Activated CD4-positive, alpha-beta T cell treated with anti-CD3 and anti-CD28 coated beads for 36 hours (primary cell): ENCODE measurements at regions of chrX and their contacts with region 1.

Region 1: DNA sequence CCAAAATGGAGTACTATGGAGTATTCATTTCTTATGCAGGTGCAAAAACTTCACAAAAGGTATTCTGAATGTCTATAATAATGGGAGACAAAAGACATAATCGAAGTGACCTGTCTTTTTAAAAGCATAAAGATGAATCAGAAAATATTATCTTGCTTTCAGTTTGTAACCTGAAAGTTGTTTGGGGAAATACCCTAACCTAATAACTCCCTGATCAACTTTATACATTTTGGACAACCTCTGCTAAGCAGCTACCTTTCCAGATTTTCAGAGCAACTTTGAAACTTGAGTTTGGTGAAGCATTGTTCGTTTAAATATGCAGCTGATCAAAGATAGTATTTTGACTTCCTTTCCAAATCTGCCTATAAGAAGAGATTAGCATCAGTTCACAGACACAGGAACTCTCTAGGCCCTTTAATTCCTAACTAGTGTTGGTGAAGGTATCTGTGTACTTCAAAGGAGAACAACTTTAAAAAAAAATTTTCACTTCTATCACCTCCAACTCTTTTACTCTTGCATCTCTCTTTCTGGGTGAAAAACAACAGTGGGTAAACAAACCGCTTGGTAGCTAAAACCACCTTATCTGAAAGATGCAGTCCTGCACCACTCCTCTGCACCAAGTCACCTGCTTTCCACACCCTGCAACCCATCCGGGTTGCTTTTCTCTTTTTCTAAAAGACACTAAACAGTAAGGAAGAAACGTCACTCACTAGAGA is 26.5 kb downstream of the CD40LG start:
- DNase-seq: no peak
- ATAC-seq: peak; percentile 13
- H3K4me3 Mint-ChIP-seq: peak overlapping the region; percentile 44
- H3K27ac Mint-ChIP-seq: peak overlapping the region; percentile 89
- H3K4me1 Mint-ChIP-seq: peaks cover 97% of the 10 kb centered on the region
- H3K27me3 Mint-ChIP-seq: no peaks in the 10 kb centered on the region

Region 2: DNA sequence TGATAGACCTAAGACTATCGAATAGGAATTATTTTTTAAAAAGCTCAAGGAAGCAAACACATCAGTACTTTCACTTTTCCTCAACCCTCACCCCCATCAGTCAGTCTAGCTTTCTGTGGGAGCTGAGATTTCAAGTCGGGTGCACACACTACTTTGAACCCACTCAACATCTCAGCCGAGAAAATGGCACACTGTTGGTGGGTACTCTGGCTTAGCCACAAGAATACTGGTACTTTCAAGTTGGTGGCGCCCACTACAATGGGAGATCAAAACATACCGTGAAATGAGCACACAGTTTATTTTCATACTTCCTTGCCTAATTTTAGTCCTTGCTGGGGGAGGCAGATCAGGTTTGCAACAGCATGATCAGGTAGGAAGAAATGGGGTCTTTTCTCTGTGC is 16.3 kb before region 1 on chrX:
- CTCF ChIA-PET with region 1: interaction called, 6 read pairs
- POLR2A ChIA-PET with region 1: interaction called, 5 read pairs
- intact Hi-C with region 1: loop called in 1 of 2 experiments (anchors 2 kb)
- DNase-seq: peak; percentile 48
- ATAC-seq: peak; percentile 6
- H3K4me3 Mint-ChIP-seq: peak overlapping the region; percentile 96
- H3K27ac Mint-ChIP-seq: peak overlapping the region; percentile 100
- H3K4me1 Mint-ChIP-seq: peaks cover 85% of the 10 kb centered on the region
- H3K27me3 Mint-ChIP-seq: no peaks in the 10 kb centered on the region

Region 3: GRCh38 chrX:136687457-136687856 is 13.0 kb after region 1 on chrX:
- CTCF ChIA-PET with region 1: interaction called, 3 read pairs
- POLR2A ChIA-PET with region 1: no interaction called
- intact Hi-C with region 1: loop called (anchors 2 kb)
- DNase-seq: peak; percentile 64
- ATAC-seq: peak; percentile 78
- H3K4me3 Mint-ChIP-seq: peak overlapping the region; percentile 35
- H3K27ac Mint-ChIP-seq: peak overlapping the region; percentile 92
- H3K4me1 Mint-ChIP-seq: peaks cover 51% of the 10 kb centered on the region
- H3K27me3 Mint-ChIP-seq: no peaks in the 10 kb centered on the region